Heart left ventricle (tissue), 16 donors: ENCODE measurements at regions of chr7 and their contacts with region 1.

Region 1: DNA sequence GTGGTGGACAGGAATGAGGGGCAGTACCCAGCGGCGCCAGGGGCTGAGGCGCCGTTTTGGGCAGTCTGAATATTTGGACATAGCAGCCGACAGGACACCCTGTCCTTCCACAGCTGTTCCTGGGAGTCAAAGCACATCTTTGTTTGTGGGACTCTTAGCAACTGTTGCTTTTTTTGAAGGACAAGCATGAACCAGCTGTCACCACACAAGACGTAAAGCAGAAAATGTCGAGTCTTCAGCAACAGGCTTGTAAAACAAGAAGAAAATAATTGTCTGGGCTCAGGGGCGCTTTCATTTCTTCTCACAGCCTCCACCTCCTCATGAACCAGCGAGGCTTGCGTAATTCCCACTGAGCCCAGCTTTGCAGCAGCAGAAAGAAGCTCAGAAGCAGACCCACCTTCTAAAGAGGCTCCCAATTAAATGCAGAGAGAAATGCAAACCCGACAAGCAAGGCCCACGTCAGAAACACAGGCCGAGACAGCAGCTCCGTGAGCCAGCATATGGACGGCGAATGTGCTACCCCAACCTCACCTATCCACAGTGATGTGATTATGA is 68.9 kb upstream of the DNAAF5 start:
- DNase-seq: peak in 1 of 5 donors; percentile 55
- ATAC-seq: peak; percentile 90 to 99 (median 97)
- H3K4me3 ChIP-seq: peak overlapping the region in 3 of 12 donors; percentile 1 to 13 (median 13)
- H3K27ac ChIP-seq: peak overlapping the region in 11 of 12 donors; percentile 66 to 91 (median 74)
- H3K4me1 ChIP-seq: peaks cover 0 to 14% (median 6%) of the 10 kb centered on the region in 12 donors
- H3K27me3 ChIP-seq: no peaks in the 10 kb centered on the region
- CTCF ChIP-seq: no peak
- POLR2A ChIP-seq: no peak

Region 2: GRCh38 chr7:636396-636795 is 21.2 kb before region 1 on chr7:
- intact Hi-C with region 1: loop called in 1 of 10 experiments (anchors 1 kb)
- DNase-seq: peak in 1 of 5 donors; percentile 46
- ATAC-seq: peak in 3 of 4 donors; percentile 54 to 69 (median 67)
- H3K4me3 ChIP-seq: no peak overlapping the region
- H3K27ac ChIP-seq: no peak overlapping the region
- H3K4me1 ChIP-seq: no peaks in the 10 kb centered on the region
- H3K27me3 ChIP-seq: no peaks in the 10 kb centered on the region
- CTCF ChIP-seq: peak in 11 of 12 donors; percentile 31 to 62 (median 42)
- POLR2A ChIP-seq: no peak

Region 3: DNA sequence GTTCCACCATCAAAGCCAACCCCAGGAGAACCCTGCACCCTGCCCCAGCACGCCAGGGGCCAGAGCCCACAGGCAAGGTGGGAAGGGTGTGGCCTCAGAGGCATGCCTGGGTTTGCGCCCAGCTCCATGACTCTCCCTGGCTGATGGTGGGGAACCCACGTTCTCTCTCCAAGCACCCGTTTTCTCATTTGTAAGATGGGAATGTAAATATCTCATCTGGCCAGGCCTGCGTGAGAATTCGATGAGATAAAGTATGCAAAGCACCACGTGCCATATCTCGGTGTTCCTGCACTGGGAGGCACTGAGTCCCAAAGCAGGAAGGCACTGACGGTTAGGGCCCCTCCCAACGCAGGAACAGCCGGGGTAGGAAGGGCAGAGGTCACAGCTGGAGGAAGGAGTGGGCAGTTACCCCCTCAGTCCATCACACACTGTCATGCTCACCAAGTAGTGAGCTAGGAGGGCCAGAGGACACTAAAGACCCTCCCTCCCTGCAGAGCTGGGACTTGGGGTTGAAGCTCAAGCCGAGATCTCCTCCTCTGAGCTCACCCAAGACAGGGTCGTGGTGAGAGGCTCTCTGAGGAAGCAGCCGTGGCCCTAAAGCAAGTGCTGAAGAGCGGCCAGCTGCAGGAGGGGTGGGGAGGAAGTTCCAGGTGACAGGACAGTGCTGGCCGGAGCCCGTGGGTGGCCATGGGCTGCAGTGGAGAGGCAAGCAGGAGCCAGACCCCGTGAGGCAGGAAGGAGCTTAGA is 41.6 kb after region 1 on chr7:
- intact Hi-C with region 1: no loop called
- DNase-seq: no peak
- ATAC-seq: peak in 3 of 4 donors; percentile 46 to 77 (median 70)
- H3K4me3 ChIP-seq: no peak overlapping the region
- H3K27ac ChIP-seq: peak overlapping the region in 2 of 12 donors; percentile 17 to 28
- H3K4me1 ChIP-seq: peaks cover 0 to 25% (median 14%) of the 10 kb centered on the region in 12 donors
- H3K27me3 ChIP-seq: no peaks in the 10 kb centered on the region
- CTCF ChIP-seq: no peak
- POLR2A ChIP-seq: no peak

Region 4: DNA sequence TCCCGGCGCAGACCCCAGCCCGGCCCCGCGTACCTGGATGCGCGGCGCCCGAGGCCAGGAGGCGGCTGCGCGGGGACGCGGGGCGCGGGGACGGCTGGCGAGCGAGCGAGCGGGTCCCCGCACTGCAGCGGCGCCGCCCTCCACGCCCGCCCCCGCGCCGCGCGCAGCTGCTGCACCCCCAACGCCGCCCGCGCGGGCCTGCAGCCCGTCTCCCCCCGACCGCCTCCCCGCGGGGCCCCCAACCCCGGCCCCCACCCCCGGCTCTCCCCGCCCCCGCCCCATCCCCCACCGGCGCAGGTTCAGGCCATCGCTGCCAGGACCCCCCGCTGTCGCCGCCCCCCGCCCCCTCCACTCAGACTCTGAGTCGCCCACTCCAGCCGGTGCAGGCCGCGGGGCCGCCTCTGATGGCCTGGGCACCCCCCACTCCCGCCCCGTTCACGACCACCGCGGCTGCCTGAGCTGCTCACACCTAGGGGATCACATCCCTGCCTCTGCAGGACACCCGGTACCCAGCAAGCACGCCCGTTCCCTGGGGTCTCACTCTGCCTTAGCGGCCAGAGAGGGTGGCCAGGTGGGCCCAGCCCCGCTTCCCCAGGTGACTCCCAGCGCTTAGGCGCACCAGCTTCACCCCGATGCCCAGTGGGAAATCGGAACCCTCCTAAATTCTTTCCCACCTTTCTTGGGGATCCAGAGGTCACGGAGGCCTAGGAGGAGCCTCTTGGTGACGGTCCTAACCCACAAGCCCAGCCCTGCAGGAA is 54.9 kb after region 1 on chr7:
- intact Hi-C with region 1: no loop called
- DNase-seq: peak in 1 of 5 donors; percentile 15
- ATAC-seq: no peak
- H3K4me3 ChIP-seq: peak overlapping the region; percentile 39 to 78 (median 62)
- H3K27ac ChIP-seq: peak overlapping the region in 3 of 12 donors; percentile 52 to 61 (median 59)
- H3K4me1 ChIP-seq: peaks cover 0 to 18% (median 0%) of the 10 kb centered on the region in 12 donors
- H3K27me3 ChIP-seq: no peaks in the 10 kb centered on the region
- CTCF ChIP-seq: no peak
- POLR2A ChIP-seq: no peak